CD8-positive, alpha-beta memory T cell (primary cell): ENCODE measurements at regions of chr3 and their contacts with region 1.

Region 1: DNA sequence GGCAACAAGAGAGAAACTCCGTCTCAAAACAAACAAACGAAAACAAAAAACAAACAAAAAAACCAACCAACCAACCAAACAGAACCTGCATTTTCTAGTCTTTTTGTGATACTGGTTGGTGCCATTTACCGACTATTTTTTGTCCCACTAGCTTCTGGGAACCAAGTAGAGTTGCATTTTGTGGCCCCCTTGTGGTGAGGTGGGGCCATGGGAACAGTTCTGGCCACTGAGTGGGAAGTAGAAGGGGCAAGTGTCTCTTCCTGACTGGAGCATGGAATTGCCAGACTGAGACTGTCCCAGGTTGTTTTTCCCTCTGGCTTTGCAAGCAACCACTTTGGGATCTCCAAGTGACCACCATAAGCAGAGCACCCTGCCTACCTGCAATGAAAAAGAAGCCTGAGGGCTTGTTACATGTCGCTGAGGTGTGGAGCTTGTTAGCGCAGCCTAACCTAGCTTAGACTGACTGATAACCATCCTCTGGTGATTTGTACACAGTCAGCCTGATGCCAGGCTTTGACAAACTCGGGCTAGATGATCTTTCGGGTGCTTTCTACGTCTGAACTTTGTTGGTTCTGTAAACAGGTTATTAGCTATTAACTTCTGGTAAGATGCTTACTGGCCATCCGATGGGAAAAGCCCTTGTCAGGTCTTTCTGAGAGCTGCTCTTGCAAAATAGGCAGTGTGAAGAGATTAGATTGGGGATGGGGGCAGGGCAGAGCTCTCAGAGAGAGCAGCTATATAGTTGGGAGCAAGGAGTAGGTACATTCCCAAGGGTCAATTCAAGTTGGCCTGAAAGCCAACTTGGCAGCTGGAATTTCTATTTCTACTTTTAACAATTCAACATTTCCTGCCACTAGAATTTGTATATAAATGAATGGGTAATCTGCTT is 172.2 kb downstream of the SSR3 start:
- DNase-seq: no peak
- H3K4me3 ChIP-seq: no peak overlapping the region
- H3K4me3 Mint-ChIP-seq: no peak overlapping the region
- H3K27ac ChIP-seq: no peak overlapping the region
- H3K27ac Mint-ChIP-seq: peak overlapping the region in 1 of 8 donors; percentile 14
- H3K4me1 ChIP-seq: no peaks in the 10 kb centered on the region
- H3K4me1 Mint-ChIP-seq: no peaks in the 10 kb centered on the region
- H3K27me3 ChIP-seq: no peaks in the 10 kb centered on the region
- H3K27me3 Mint-ChIP-seq: peaks cover 3 to 17% of the 10 kb centered on the region in 2 donors

Region 2: DNA sequence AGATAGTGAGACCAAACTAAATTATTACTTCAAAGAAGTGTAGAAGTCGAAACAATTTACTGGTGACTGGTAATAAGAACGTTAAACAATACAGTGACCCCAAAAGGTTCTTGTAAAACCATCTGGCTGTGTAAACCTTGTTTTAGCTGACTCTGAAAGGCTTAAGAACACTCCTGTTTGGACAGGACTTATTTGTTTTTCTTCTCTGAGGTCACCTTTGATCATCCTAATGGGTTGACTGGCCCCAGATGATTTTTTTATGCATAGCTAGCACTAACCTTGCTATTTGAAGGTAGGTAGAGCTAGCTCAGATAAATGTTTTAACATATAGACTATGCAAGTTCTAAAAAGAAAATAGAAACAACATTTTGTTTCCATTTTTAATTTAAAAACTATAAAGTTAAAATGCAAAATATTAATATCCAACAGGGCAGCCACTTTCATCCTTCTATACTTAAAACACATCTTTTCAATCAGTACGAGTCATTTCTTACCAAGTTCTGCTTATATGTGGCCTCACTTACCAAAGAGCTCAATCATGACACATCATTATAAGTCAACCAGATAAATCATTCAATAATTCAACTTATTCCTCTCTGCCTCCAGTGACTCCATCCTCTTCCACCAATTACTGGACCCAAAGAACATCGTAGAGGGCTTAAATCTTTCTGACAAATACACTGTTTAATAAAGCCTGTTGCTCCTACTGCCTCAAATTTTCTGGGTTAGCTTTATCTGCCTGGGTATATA is 13.4 kb after region 1 on chr3:
- CTCF ChIA-PET with region 1: interaction called, 4 read pairs
- POLR2A ChIA-PET with region 1: interaction called, 11 read pairs
- DNase-seq: no peak
- H3K4me3 ChIP-seq: no peak overlapping the region
- H3K4me3 Mint-ChIP-seq: no peak overlapping the region
- H3K27ac ChIP-seq: no peak overlapping the region
- H3K27ac Mint-ChIP-seq: no peak overlapping the region
- H3K4me1 ChIP-seq: no peaks in the 10 kb centered on the region
- H3K4me1 Mint-ChIP-seq: no peaks in the 10 kb centered on the region
- H3K27me3 ChIP-seq: no peaks in the 10 kb centered on the region
- H3K27me3 Mint-ChIP-seq: peaks cover 2 to 29% of the 10 kb centered on the region in 2 donors